ENCODE measurements at regions of chr11 and their contacts with region 1.

Region 1: GRCh38 chr11:12888525-12889158 is 120.5 kb upstream of the RASSF10 start:
- DNase-seq: peak; percentile 85 to 91
- ATAC-seq: peak; percentile 83 to 87 (median 84)
- H3K4me3 ChIP-seq: no peak overlapping the region
- H3K27ac ChIP-seq: peak overlapping the region; percentile 82
- H3K4me1 ChIP-seq: peaks cover 44% of the 10 kb centered on the region
- H3K27me3 ChIP-seq: no peaks in the 10 kb centered on the region
- CTCF ChIP-seq: peak; percentile 78

Region 2: GRCh38 chr11:12331239-12331874 is 557.3 kb before region 1 on chr11:
- intact Hi-C with region 1: loop called (anchors 1 to 5 kb)
- DNase-seq: peak; percentile 79 to 89
- ATAC-seq: peak; percentile 80 to 93 (median 84)
- H3K4me3 ChIP-seq: no peak overlapping the region
- H3K27ac ChIP-seq: no peak overlapping the region
- H3K4me1 ChIP-seq: no peaks in the 10 kb centered on the region
- H3K27me3 ChIP-seq: no peaks in the 10 kb centered on the region
- CTCF ChIP-seq: peak; percentile 82

Region 3: DNA sequence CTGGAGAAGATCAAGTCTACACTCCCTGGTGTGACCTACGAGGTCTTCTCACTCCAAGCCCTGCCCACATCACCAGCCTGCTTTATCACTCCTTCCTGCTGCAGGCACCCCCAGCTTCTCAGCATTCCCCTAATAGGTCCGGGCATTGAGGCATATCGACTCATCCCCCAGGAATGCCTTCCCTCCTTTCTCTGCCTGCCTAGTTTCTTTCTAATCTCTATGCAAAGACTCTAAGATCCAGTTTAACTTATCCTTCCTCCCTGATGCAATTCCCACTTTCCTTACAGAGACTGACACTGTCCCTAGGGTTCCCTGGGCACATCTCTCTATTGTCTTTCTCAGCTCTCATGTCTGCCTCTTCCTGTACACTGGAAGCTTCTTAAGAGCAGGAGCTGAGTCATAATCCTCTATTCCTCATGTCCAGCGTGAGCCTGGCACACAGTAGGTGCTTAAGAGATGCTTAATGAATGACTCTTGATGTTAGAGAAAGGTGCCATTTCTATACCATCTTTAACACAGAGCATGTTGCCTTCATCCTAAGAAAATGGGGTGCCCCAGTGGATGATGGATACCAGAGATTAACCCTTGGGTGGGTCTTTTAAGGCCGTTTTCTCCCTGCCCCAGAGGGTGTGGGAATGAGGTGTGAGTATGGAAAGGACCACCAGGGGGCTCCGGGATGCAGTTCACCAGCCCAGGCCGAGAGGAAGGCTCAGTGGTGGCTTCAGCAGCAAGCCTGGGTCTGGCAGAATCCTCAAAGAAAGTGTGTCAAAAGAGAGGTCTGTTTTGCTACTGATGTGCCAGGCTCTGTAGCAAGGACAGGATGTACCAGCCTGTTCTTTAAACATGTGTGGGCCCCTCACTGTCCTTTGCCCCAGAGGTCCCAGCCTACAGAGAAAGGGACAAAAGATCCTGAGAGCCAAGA is 476.6 kb before region 1 on chr11:
- intact Hi-C with region 1: loop called (anchors 1 to 5 kb)
- DNase-seq: peak; percentile 68 to 79
- ATAC-seq: peak; percentile 90 to 92 (median 91)
- H3K4me3 ChIP-seq: no peak overlapping the region
- H3K27ac ChIP-seq: peak overlapping the region; percentile 30
- H3K4me1 ChIP-seq: peaks cover 26% of the 10 kb centered on the region
- H3K27me3 ChIP-seq: no peaks in the 10 kb centered on the region
- CTCF ChIP-seq: peak; percentile 66

Region 4: GRCh38 chr11:12599408-12600143 is 289.1 kb before region 1 on chr11:
- intact Hi-C with region 1: loop called (anchors 2 to 5 kb)
- DNase-seq: peak; percentile 47 to 77
- ATAC-seq: peak; percentile 81 to 96 (median 86)
- H3K4me3 ChIP-seq: no peak overlapping the region
- H3K27ac ChIP-seq: no peak overlapping the region
- H3K4me1 ChIP-seq: no peaks in the 10 kb centered on the region
- H3K27me3 ChIP-seq: no peaks in the 10 kb centered on the region
- CTCF ChIP-seq: peak; percentile 81

Region 5: DNA sequence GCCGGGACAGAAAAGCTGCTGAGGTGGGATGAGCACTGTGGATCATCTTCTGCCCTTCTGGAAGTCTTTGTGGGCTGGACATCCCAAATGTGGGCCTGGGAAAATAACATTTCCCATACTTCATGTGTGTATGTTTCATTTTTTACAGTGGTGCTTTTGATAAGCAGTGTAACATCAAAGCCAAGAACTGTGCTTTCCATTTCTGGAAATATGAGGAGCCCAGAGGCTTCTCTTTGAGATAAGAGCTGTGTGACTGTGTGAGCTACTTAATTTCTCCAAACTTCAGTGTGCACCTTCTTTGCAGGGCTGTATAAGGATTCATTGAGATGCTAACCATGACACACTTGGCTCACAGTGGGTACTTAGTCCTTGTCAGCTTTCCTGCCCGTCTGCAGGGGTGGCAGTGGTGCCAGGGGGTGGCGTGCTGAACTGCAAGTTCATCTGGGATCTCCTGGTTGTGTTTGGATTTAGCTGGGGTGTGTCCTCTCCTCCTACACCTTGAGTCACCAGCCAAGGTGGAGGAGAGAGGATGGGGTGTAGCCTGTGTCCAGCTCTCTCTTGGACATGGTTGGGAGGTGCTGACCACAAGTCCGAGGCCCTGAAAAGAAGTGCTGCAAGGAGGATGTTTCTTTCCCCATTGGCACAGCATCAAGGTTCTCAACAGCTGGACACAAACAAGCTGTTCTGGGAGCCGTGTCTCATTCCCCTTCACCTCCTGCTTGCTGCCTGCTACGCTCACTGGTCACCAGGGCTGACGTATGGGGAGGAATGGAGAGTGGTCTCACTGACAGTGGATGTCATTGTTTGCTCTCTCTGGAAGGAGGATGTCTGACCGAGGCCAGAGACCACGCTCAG is 75.0 kb before region 1 on chr11:
- intact Hi-C with region 1: loop called in 1 of 2 experiments (anchors 10 kb)
- DNase-seq: peak in 1 of 2 donors; percentile 63
- ATAC-seq: peak in 3 of 4 donors; percentile 52 to 60 (median 56)
- H3K4me3 ChIP-seq: no peak overlapping the region
- H3K27ac ChIP-seq: peak overlapping the region; percentile 87
- H3K4me1 ChIP-seq: peaks cover 75% of the 10 kb centered on the region
- H3K27me3 ChIP-seq: no peaks in the 10 kb centered on the region
- CTCF ChIP-seq: no peak

Region 6: DNA sequence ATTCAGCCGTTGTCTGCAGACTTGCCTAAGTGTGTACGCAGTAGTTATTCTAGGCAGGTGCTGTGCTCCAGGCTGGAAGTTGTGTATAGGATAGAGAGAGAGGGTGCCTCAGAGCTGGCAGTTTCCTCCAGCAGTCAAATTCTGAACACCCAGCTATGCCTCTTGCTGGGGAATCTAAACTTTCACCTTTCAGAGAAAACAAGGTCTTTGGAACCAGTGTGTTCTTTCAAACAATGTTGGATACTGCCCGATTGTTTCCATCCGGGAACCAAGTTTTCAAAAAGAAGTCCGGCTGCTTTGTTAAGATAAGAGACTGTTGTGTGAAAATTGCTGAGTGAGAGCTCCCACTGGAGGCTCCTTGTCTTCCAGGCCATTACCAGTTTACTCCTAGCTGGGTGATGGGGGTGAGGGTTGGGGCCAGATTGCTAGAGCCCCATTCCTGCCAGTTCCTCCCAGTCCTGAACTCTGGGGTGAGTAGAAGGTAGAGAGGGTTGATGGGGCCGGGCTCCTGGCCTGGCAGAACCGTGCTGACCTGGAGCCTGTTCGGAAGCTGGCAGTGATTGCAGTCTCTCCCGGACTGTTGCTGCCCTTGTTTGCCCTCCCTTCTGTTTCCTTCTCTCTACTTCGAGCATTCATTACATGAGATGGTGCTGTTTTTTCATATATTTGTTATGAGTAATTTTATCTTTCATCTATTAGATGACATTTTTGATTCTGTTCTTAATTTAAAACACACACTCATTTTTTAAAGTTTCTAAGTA is 64.2 kb before region 1 on chr11:
- intact Hi-C with region 1: loop called (anchors 5 to 10 kb)
- DNase-seq: no peak
- ATAC-seq: peak; percentile 51 to 69 (median 58)
- H3K4me3 ChIP-seq: no peak overlapping the region
- H3K27ac ChIP-seq: peak overlapping the region; percentile 56
- H3K4me1 ChIP-seq: peaks cover 75% of the 10 kb centered on the region
- H3K27me3 ChIP-seq: no peaks in the 10 kb centered on the region
- CTCF ChIP-seq: no peak

Region 7: GRCh38 chr11:12841946-12842630 is 46.6 kb before region 1 on chr11:
- intact Hi-C with region 1: loop called in 1 of 2 experiments (anchors 5 kb)
- DNase-seq: no peak
- ATAC-seq: no peak
- H3K4me3 ChIP-seq: no peak overlapping the region
- H3K27ac ChIP-seq: peak overlapping the region; percentile 69
- H3K4me1 ChIP-seq: peaks cover 76% of the 10 kb centered on the region
- H3K27me3 ChIP-seq: no peaks in the 10 kb centered on the region
- CTCF ChIP-seq: no peak

Region 8: GRCh38 chr11:12930850-12931249 is 42.2 kb after region 1 on chr11:
- intact Hi-C with region 1: no loop called
- DNase-seq: no peak
- ATAC-seq: no peak
- H3K4me3 ChIP-seq: no peak overlapping the region
- H3K27ac ChIP-seq: no peak overlapping the region
- H3K4me1 ChIP-seq: no peaks in the 10 kb centered on the region
- H3K27me3 ChIP-seq: no peaks in the 10 kb centered on the region
- CTCF ChIP-seq: no peak

Region 9: DNA sequence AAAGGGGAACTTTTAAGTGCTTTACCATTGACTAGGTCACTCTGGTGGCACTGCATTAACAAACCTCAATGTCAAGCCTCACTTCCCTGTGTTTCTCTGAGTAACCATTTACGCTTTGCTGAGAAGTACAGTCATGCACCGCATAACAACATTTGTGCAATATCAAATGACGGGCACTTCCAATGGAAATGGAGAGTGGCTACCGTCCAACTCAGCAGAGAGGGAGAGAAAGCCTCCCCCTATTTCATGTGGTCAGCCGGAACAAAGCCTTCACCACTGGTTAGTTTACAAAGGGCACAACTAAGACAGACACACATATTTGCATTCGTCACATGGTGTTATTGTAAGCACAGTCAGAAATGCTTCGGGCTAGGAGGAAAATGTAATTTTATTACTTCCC is 237.8 kb after region 1 on chr11:
- intact Hi-C with region 1: no loop called
- DNase-seq: no peak
- ATAC-seq: no peak
- H3K4me3 ChIP-seq: no peak overlapping the region
- H3K27ac ChIP-seq: no peak overlapping the region
- H3K4me1 ChIP-seq: no peaks in the 10 kb centered on the region
- H3K27me3 ChIP-seq: no peaks in the 10 kb centered on the region
- CTCF ChIP-seq: no peak

Measured in psoas muscle (tissue), 8 donors.